Caco-2 (cell line): ENCODE measurements at regions of chr3 and their contacts with region 1.

Region 1: DNA sequence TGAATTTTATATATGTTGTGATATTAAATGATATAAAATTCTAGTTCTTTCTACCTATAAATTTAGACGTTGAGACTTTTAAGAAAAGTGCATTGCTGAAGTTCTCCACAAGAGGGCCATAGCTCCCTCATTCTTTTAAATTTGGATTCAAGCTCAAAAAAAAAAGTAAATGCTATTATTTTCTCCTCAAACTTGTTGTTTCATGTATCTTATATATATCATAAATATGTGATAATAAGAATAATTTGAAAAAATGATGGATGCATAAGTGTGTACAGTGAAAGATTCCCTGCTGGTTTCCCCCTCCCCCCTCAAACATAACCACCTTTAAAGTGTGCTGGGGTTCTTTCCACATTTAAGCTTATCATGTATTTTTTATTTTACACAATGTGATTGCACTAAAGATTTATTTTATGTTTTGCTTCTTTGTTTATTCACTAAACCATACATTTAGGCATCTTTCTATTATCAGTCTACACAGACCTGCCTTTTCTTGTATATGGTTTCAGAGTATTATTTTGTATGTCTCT is 769.4 kb upstream of the GOLIM4 start:
- DNase-seq: peak in 1 of 2 experiments; percentile 33
- H3K4me3 ChIP-seq: no peak overlapping the region
- H3K4me3 Mint-ChIP-seq: no peak overlapping the region
- H3K27ac Mint-ChIP-seq: no peak overlapping the region
- H3K4me1 ChIP-seq: peaks cover 64% of the 10 kb centered on the region
- H3K4me1 Mint-ChIP-seq: peaks cover 17% of the 10 kb centered on the region
- H3K27me3 ChIP-seq: no peaks in the 10 kb centered on the region
- H3K27me3 Mint-ChIP-seq: no peaks in the 10 kb centered on the region
- CTCF ChIP-seq: peak; percentile 72 to 78

Region 2: GRCh38 chr3:168889666-168890065 is 24.6 kb after region 1 on chr3:
- CTCF ChIA-PET with region 1: interaction called, 5 read pairs
- POLR2A ChIA-PET with region 1: no interaction called
- intact Hi-C with region 1: loop called (anchors 1 kb)
- DNase-seq: no peak
- H3K4me3 ChIP-seq: no peak overlapping the region
- H3K4me3 Mint-ChIP-seq: no peak overlapping the region
- H3K27ac Mint-ChIP-seq: no peak overlapping the region
- H3K4me1 ChIP-seq: peaks cover 22% of the 10 kb centered on the region
- H3K4me1 Mint-ChIP-seq: peaks cover 10% of the 10 kb centered on the region
- H3K27me3 ChIP-seq: no peaks in the 10 kb centered on the region
- H3K27me3 Mint-ChIP-seq: no peaks in the 10 kb centered on the region
- CTCF ChIP-seq: no peak

Region 3: DNA sequence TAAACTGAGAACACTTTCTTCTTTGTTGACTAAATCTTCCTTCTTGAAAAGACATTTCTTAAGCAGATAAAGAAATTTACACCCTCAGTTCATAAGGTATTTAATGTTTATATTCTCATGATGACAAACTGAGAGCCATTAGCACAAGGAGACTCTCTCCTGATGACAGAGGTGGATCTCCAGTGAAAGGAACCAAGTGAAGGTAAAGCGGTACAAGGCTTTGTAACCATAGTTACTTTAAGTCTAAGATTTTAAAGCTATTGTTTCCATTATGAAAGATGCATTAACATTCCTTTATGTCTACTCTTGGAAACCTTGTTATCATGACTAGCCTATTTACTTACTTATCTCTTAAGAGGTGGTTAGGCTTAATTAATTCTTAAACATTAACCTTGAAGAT is 61.3 kb after region 1 on chr3:
- CTCF ChIA-PET with region 1: no interaction called
- POLR2A ChIA-PET with region 1: no interaction called
- intact Hi-C with region 1: loop called (anchors 1 kb)
- DNase-seq: peak in 1 of 2 experiments; percentile 58
- H3K4me3 ChIP-seq: no peak overlapping the region
- H3K4me3 Mint-ChIP-seq: no peak overlapping the region
- H3K27ac Mint-ChIP-seq: peak overlapping the region; percentile 59
- H3K4me1 ChIP-seq: peaks cover 27% of the 10 kb centered on the region
- H3K4me1 Mint-ChIP-seq: peaks cover 19% of the 10 kb centered on the region
- H3K27me3 ChIP-seq: no peaks in the 10 kb centered on the region
- H3K27me3 Mint-ChIP-seq: no peaks in the 10 kb centered on the region
- CTCF ChIP-seq: no peak

Region 4: GRCh38 chr3:169022457-169022856 is 157.4 kb after region 1 on chr3:
- CTCF ChIA-PET with region 1: no interaction called
- POLR2A ChIA-PET with region 1: no interaction called
- intact Hi-C with region 1: loop called (anchors 5 kb)
- DNase-seq: no peak
- H3K4me3 ChIP-seq: no peak overlapping the region
- H3K4me3 Mint-ChIP-seq: no peak overlapping the region
- H3K27ac Mint-ChIP-seq: no peak overlapping the region
- H3K4me1 ChIP-seq: peaks cover 18% of the 10 kb centered on the region; the same call in 1 of the 2 replicates
- H3K4me1 Mint-ChIP-seq: no peaks in the 10 kb centered on the region
- H3K27me3 ChIP-seq: no peaks in the 10 kb centered on the region
- H3K27me3 Mint-ChIP-seq: no peaks in the 10 kb centered on the region
- CTCF ChIP-seq: no peak

Region 5: DNA sequence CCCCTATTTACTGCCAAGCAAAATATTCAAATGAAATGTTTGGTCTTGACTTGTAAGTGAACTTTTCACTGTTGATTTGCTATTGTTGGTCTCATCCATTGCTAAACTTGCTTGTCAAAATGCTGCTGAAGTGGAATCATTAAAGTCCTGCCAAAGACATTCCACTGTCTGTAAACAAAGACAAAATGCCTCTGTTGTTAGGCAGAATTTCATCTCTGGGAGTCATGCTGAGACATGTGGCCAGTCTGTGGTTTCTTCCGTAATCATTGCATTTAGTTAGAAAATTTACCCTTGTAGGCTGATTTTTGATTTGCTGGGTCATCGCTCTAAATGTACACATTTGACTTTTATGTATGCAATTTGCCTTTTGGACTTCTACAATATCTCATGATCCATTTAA is 220.7 kb after region 1 on chr3:
- CTCF ChIA-PET with region 1: no interaction called
- POLR2A ChIA-PET with region 1: no interaction called
- intact Hi-C with region 1: loop called (anchors 10 kb)
- DNase-seq: no peak
- H3K4me3 ChIP-seq: no peak overlapping the region
- H3K4me3 Mint-ChIP-seq: no peak overlapping the region
- H3K27ac Mint-ChIP-seq: no peak overlapping the region
- H3K4me1 ChIP-seq: no peaks in the 10 kb centered on the region
- H3K4me1 Mint-ChIP-seq: peaks cover 7% of the 10 kb centered on the region
- H3K27me3 ChIP-seq: no peaks in the 10 kb centered on the region
- H3K27me3 Mint-ChIP-seq: no peaks in the 10 kb centered on the region
- CTCF ChIP-seq: no peak